ENCODE measurements at regions of chr3 and their contacts with region 1.

Region 1: GRCh38 chr3:195850857-195851543 is 39.3 kb upstream of the MUC4 start:
- DNase-seq: peak; percentile 83 to 89 (median 88)
- H3K4me3 ChIP-seq: no peak overlapping the region
- H3K4me3 Mint-ChIP-seq: peak overlapping the region in 5 of 8 donors; percentile 40 to 63 (median 50)
- H3K27ac ChIP-seq: no peak overlapping the region
- H3K27ac Mint-ChIP-seq: peak overlapping the region in 2 of 7 donors; percentile 6 to 32
- H3K4me1 ChIP-seq: peaks cover 5% of the 10 kb centered on the region
- H3K4me1 Mint-ChIP-seq: peaks cover 5 to 8% (median 6%) of the 10 kb centered on the region in 4 donors
- H3K27me3 ChIP-seq: no peaks in the 10 kb centered on the region
- H3K27me3 Mint-ChIP-seq: peaks cover 0 to 4% of the 10 kb centered on the region in 2 donors

Region 2: GRCh38 chr3:195558602-195559001 is 292.4 kb before region 1 on chr3:
- CTCF ChIA-PET with region 1: interaction called, 8 read pairs
- POLR2A ChIA-PET with region 1: no interaction called
- intact Hi-C with region 1: loop called (anchors 1 kb)
- DNase-seq: peak; percentile 57 to 66 (median 62)
- H3K4me3 ChIP-seq: no peak overlapping the region
- H3K4me3 Mint-ChIP-seq: no peak overlapping the region
- H3K27ac ChIP-seq: no peak overlapping the region
- H3K27ac Mint-ChIP-seq: peak overlapping the region; percentile 6 to 81 (median 57)
- H3K4me1 ChIP-seq: peaks cover 17% of the 10 kb centered on the region
- H3K4me1 Mint-ChIP-seq: peaks cover 19 to 34% (median 27%) of the 10 kb centered on the region in 4 donors
- H3K27me3 ChIP-seq: no peaks in the 10 kb centered on the region
- H3K27me3 Mint-ChIP-seq: no peaks in the 10 kb centered on the region

Region 3: DNA sequence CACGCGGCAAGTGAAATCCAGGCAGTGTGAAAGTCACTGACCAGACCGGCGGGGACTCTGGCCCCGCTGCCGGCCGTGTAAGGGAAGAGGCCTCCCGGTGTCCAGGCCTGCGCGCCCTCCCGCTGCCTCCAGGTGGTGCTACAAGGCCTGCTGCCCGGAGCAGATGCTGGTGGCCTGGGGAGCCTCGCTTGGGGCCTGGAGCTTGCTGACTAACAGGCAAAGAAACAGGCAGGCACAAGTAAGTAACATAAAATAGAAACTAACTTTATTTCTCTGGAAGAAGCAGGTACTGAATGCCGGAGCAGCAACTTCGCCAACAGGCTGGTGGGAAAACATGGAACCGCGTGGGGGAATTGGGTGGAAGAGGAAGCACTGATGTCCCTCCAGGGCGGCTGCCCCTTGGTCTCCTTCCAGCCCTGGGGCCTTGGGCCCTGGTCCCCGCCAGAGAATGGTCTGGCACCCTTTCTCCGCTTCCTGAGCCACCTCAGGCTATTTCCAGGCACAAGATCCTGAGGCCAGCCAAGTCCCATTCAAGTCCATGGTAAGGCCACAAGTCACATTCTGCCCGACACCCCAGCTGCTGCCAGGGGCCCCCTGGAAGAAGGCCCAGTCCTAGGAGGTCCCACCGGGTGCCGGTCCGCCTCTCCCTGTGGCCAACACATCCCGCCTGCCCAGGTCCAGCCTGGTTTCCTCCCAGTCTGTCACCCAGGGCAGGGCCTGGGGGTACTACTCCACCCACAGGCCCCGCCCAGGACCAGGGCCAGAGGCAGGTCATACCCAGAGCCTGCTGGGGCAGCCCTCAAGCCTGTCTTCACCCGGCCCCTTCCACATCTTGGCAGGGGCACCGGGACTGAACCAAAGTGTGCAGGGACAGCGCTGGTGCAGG is 12.4 kb after region 1 on chr3:
- CTCF ChIA-PET with region 1: interaction called, 11 read pairs
- POLR2A ChIA-PET with region 1: no interaction called
- intact Hi-C with region 1: no loop called
- DNase-seq: peak; percentile 30 to 54 (median 43)
- H3K4me3 ChIP-seq: no peak overlapping the region
- H3K4me3 Mint-ChIP-seq: no peak overlapping the region
- H3K27ac ChIP-seq: no peak overlapping the region
- H3K27ac Mint-ChIP-seq: peak overlapping the region in 2 of 7 donors; percentile 47 to 48
- H3K4me1 ChIP-seq: peaks cover 8% of the 10 kb centered on the region
- H3K4me1 Mint-ChIP-seq: peaks cover 5 to 8% (median 7%) of the 10 kb centered on the region in 4 donors
- H3K27me3 ChIP-seq: no peaks in the 10 kb centered on the region
- H3K27me3 Mint-ChIP-seq: no peaks in the 10 kb centered on the region

Region 4: GRCh38 chr3:195909644-195910508 is 58.9 kb after region 1 on chr3:
- CTCF ChIA-PET with region 1: interaction called, 234 read pairs
- POLR2A ChIA-PET with region 1: interaction called, 3 read pairs
- intact Hi-C with region 1: no loop called
- DNase-seq: peak; percentile 86 to 88 (median 87)
- H3K4me3 ChIP-seq: peak overlapping the region; percentile 42 to 47
- H3K4me3 Mint-ChIP-seq: peak overlapping the region; percentile 57 to 79 (median 65)
- H3K27ac ChIP-seq: peak overlapping the region; percentile 58
- H3K27ac Mint-ChIP-seq: peak overlapping the region in 6 of 7 donors; percentile 46 to 88 (median 76)
- H3K4me1 ChIP-seq: peaks cover 43% of the 10 kb centered on the region
- H3K4me1 Mint-ChIP-seq: peaks cover 22 to 46% (median 33%) of the 10 kb centered on the region in 4 donors
- H3K27me3 ChIP-seq: no peaks in the 10 kb centered on the region
- H3K27me3 Mint-ChIP-seq: no peaks in the 10 kb centered on the region

Region 5: DNA sequence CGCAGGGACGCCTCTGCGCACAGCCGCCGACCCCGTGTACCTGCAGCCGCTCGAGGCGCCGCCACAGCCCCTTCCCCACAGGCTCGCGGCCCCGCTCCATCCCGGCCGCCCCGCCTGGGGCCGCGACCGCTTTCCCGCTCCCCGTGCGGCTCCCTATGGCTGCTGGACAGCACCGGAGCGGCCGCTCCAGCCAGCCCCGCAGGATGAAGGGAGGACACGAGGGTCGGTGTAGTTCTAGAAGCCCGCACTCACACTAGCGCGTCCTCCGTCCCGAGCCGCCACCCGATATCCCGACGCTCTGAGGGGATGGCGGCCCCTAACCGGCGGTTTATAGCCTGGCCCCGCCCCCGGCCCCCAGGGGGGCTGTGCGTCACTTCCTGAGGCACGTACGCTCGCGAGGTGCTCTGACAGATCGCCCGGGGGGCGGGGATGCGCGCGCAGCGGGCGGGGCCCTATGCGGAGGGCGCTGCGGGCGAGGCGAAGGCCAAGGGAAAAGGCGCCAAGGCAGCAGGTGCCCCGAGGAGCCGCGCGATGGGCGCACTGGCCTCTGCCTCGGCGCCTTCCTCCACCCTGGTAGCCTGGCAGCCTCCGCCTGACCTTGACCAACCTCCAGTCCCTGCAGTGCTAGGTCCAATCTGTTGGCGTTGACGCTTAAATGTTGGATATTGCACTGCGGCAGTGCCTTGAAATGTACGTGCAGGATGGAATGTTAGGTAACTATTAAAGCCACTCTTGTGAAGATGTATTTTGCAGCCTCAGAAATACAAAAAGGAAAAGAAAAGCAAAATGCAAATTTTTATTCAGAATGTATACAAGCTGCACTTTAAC is 231.0 kb after region 1 on chr3 and contains the start of gene TFRC:
- CTCF ChIA-PET with region 1: no interaction called
- POLR2A ChIA-PET with region 1: no interaction called
- intact Hi-C with region 1: no loop called
- DNase-seq: peak; percentile 93 to 95 (median 94)
- H3K4me3 ChIP-seq: peak within 1 kb of the TSS; percentile 68 to 90
- H3K4me3 Mint-ChIP-seq: peak within 1 kb of the TSS; percentile 90 to 99 (median 94)
- H3K27ac ChIP-seq: peak within 1 kb of the TSS; percentile 97
- H3K27ac Mint-ChIP-seq: peak within 1 kb of the TSS; percentile 85 to 99 (median 96)
- H3K4me1 ChIP-seq: peaks cover 45% of the 10 kb centered on the region
- H3K4me1 Mint-ChIP-seq: peaks cover 24 to 48% (median 38%) of the 10 kb centered on the region in 4 donors
- H3K27me3 ChIP-seq: no peaks in the 10 kb centered on the region
- H3K27me3 Mint-ChIP-seq: no peaks in the 10 kb centered on the region
- total RNA-seq, gene TFRC: 63.2 to 73.1 TPM